Activated CD4-positive, alpha-beta T cell treated with anti-CD3 and anti-CD28 coated beads, Interleukin-2, amount 10 ng/mL, durations not matched to agents 7 days and 5 days (primary cell): ENCODE measurements at regions of chr9 and their contacts with region 1.

Region 1: DNA sequence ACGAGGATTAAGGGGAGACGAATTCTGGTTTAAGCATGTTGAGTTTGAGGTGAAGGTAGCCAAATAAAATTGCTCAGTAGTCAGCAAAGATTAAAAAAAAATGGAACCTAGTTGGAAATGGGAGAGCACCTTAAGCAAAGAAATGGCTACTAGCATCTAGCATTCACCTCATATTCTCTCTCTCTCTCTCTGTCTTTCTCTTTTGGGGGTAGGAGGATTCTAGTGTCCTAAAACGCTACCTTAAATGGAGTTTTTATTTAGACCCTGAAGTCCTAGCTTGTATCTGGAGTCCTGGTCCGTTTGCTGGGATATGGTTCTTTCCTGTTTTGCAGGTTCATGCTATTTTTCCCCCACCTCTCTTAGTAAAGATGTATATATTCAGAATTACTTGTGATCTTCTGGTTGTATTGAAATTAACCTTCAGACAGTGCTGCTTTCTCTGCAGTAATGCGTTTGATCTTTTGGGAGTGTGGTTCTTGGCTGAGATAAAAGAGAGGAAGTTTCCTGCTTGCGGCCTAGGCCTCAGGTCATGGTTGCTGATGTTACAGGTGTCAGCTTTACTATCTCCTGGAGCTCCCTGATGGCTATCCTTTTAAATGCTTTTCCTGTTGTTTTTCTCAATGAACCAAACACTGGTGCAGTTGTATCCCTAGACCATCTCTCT is 8.0 kb downstream of the TGFBR1 start:
- DNase-seq: peak; percentile 79
- H3K4me3 Mint-ChIP-seq: peak overlapping the region; percentile 57
- H3K27ac Mint-ChIP-seq: peak overlapping the region; percentile 84
- H3K4me1 Mint-ChIP-seq: peaks cover 90% of the 10 kb centered on the region
- H3K27me3 Mint-ChIP-seq: no peaks in the 10 kb centered on the region

Region 2: GRCh38 chr9:99012942-99013512 is 99.9 kb before region 1 on chr9:
- CTCF ChIA-PET with region 1: interaction called, 10 read pairs
- POLR2A ChIA-PET with region 1: no interaction called
- DNase-seq: no peak
- H3K4me3 Mint-ChIP-seq: no peak overlapping the region
- H3K27ac Mint-ChIP-seq: peak overlapping the region; percentile 93
- H3K4me1 Mint-ChIP-seq: peaks cover 17% of the 10 kb centered on the region
- H3K27me3 Mint-ChIP-seq: no peaks in the 10 kb centered on the region

Region 3: DNA sequence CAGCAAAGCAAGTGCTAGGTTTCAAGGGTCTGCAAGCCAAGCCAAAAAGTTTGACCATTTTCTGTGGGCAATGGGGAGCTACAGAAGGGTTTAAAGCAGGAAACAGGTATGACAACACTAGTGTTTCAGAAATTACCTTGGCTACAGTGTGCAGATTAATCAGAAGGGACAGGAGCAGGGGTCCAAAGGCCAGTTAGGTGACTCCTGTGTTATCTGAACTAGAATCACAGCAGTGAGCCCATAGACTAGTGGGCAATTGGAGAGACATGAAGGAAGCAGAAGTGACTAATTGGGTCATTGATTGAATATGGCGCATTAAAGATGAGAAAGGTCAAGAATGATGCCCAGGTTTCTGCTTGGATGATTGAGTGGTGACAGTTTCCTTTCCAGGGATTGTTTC is 49.4 kb before region 1 on chr9:
- CTCF ChIA-PET with region 1: no interaction called
- POLR2A ChIA-PET with region 1: no interaction called
- DNase-seq: no peak
- H3K4me3 Mint-ChIP-seq: no peak overlapping the region
- H3K27ac Mint-ChIP-seq: no peak overlapping the region
- H3K4me1 Mint-ChIP-seq: peaks cover 42% of the 10 kb centered on the region
- H3K27me3 Mint-ChIP-seq: peaks cover 14% of the 10 kb centered on the region

Region 4: DNA sequence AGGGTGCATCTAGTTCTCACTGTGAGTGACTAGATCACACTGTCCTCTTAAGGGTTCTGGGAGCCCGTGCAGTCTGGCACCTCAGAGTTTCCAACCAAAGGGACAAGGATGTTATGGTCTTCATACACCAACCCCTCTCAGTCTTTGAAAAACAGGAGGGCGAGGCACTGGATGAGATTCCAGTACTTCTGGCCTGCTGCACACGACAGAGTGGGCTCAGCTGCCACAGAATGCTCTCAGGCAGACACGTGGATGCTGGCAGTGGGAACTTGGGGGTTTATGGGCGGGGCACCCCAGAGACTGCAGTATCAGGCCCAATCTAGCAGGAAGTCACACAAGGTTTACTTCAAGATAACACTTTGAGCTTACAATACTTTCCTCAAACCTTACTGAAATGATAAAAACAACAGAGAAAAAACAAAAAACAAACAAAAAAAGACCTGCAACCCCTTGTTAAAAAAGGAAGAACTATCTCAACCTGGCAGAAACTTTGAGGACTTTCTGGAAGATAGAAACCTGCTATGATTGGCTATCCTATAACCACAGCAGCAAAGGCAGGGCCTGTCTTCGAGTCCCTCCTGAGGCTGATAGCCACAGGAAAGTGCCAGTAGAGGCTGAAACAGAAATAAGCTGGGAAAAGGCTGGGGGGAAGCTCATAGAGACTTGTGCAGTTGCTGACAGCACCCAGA is 36.3 kb before region 1 on chr9:
- CTCF ChIA-PET with region 1: no interaction called
- POLR2A ChIA-PET with region 1: no interaction called
- DNase-seq: peak; percentile 53
- H3K4me3 Mint-ChIP-seq: peak overlapping the region; percentile 4
- H3K27ac Mint-ChIP-seq: peak overlapping the region; percentile 94
- H3K4me1 Mint-ChIP-seq: peaks cover 37% of the 10 kb centered on the region
- H3K27me3 Mint-ChIP-seq: peaks cover 2% of the 10 kb centered on the region